ENCODE measurements at regions of chr2 and their contacts with region 1.

Region 1: DNA sequence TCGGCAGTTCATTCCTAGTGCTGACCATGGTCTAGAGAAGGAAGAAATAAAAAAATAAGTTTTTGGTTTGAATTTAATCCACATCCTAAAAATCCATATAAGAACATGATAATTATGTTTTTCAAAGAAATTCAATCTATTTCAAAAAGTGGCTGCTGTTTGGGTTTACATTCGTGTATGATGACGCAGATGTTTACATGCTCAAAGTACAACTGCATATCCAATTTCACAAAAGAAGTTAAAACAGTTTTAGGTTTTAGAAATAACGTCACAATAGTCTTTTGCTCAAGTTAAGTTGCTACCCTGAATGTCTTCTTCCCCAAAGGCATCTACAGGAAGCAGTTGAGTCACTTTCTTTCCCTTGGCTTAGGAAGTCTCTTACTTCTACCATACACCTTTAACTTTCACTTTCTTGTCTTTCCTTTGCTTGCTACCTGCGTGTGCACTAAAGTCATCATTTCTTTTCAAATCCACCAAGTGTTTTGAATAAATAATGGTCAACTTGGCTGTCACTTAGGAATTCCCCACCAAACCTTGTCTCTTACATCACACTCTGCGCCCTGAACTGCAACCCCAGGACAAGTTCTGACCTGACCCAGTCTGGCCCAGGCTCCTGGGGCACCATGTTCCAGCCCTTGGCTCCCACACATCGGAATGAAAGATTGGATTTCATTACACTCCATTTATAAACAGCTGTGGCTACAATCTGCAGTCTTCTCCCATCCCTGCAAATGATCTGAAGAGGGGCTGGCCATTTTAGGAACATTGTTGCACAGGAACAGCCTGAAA is 28.4 kb downstream of the FAM237A start:
- DNase-seq: no peak
- ATAC-seq: no peak
- H3K4me3 ChIP-seq: no peak overlapping the region
- H3K27ac ChIP-seq: no peak overlapping the region
- H3K4me1 ChIP-seq: no peaks in the 10 kb centered on the region
- H3K27me3 ChIP-seq: peaks cover 0 to 6% (median 0%) of the 10 kb centered on the region in 9 donors
- CTCF ChIP-seq: no peak
- POLR2A ChIP-seq: no peak

Region 2: GRCh38 chr2:206502729-206503128 is 168.0 kb before region 1 on chr2:
- intact Hi-C with region 1: no loop called
- DNase-seq: no peak
- ATAC-seq: no peak
- H3K4me3 ChIP-seq: no peak overlapping the region
- H3K27ac ChIP-seq: no peak overlapping the region
- H3K4me1 ChIP-seq: peaks cover 0 to 11% (median 0%) of the 10 kb centered on the region in 12 donors
- H3K27me3 ChIP-seq: no peaks in the 10 kb centered on the region
- CTCF ChIP-seq: no peak
- POLR2A ChIP-seq: no peak

Region 3: DNA sequence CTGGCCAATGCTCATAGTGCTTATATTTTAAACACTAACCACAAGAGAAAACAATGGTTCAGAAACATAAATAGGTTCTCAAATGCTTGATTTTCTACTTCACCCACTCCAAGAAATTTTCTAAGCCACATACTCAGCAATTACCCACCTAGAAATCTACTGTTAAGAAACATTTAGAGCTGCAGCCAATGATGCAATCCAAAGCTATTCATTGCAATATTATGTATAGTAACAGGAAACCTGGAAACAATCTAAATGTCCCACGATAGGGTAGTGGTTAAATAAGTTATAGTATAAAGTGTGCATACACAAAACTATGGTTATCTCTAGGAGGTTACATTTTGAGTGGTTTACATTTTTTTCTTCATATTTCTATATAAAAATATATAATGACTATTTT is 22.7 kb before region 1 on chr2:
- intact Hi-C with region 1: loop called in 1 of 10 experiments (anchors 1 kb)
- DNase-seq: no peak
- ATAC-seq: no peak
- H3K4me3 ChIP-seq: no peak overlapping the region
- H3K27ac ChIP-seq: no peak overlapping the region
- H3K4me1 ChIP-seq: no peaks in the 10 kb centered on the region
- H3K27me3 ChIP-seq: peaks cover 0 to 1% (median 0%) of the 10 kb centered on the region in 9 donors
- CTCF ChIP-seq: no peak
- POLR2A ChIP-seq: no peak